Activated CD8-positive, alpha-beta T cell treated with anti-CD3 and anti-CD28 coated beads for 36 hours (primary cell): ENCODE measurements at regions of chr12 and their contacts with region 1.

Region 1: GRCh38 chr12:87861791-87862190 is 167.4 kb downstream of the C12orf50 start:
- DNase-seq: no peak
- ATAC-seq: no peak
- H3K4me3 Mint-ChIP-seq: no peak overlapping the region
- H3K27ac Mint-ChIP-seq: no peak overlapping the region
- H3K4me1 Mint-ChIP-seq: no peaks in the 10 kb centered on the region
- H3K27me3 Mint-ChIP-seq: no peaks in the 10 kb centered on the region
- CTCF ChIP-seq: no peak

Region 2: GRCh38 chr12:87848248-87848868 is 13.4 kb before region 1 on chr12:
- CTCF ChIA-PET with region 1: interaction called, 14 read pairs
- POLR2A ChIA-PET with region 1: no interaction called
- intact Hi-C with region 1: no loop called
- DNase-seq: peak; percentile 2
- ATAC-seq: no peak
- H3K4me3 Mint-ChIP-seq: no peak overlapping the region
- H3K27ac Mint-ChIP-seq: no peak overlapping the region
- H3K4me1 Mint-ChIP-seq: no peaks in the 10 kb centered on the region
- H3K27me3 Mint-ChIP-seq: peaks cover 4% of the 10 kb centered on the region
- CTCF ChIP-seq: peak; percentile 72

Region 3: GRCh38 chr12:88141770-88142609 is 280.2 kb after region 1 on chr12 and contains the starts of genes CEP290 and TMTC3:
- CTCF ChIA-PET with region 1: no interaction called
- POLR2A ChIA-PET with region 1: no interaction called
- intact Hi-C with region 1: no loop called
- DNase-seq: peak; percentile 96
- ATAC-seq: peak; percentile 97
- H3K4me3 Mint-ChIP-seq: peak within 1 kb of the TSS; percentile 97
- H3K27ac Mint-ChIP-seq: peak within 1 kb of the TSS; percentile 95
- H3K4me1 Mint-ChIP-seq: peaks cover 33% of the 10 kb centered on the region
- H3K27me3 Mint-ChIP-seq: no peaks in the 10 kb centered on the region
- CTCF ChIP-seq: no peak
- total RNA-seq, gene CEP290: 15.2 to 15.3 TPM
- total RNA-seq, gene TMTC3: 4.7 to 5.0 TPM

Region 4: GRCh38 chr12:88493636-88494035 is 631.8 kb after region 1 on chr12:
- CTCF ChIA-PET with region 1: no interaction called
- POLR2A ChIA-PET with region 1: no interaction called
- intact Hi-C with region 1: no loop called
- DNase-seq: no peak
- ATAC-seq: no peak
- H3K4me3 Mint-ChIP-seq: no peak overlapping the region
- H3K27ac Mint-ChIP-seq: no peak overlapping the region
- H3K4me1 Mint-ChIP-seq: no peaks in the 10 kb centered on the region
- H3K27me3 Mint-ChIP-seq: no peaks in the 10 kb centered on the region
- CTCF ChIP-seq: no peak